ENCODE measurements at regions of chr14 and their contacts with region 1.

Region 1: GRCh38 chr14:76876076-76876475 is 49.9 kb downstream of the LRRC74A start:
- DNase-seq: peak; percentile 81
- H3K27ac ChIP-seq: no peak overlapping the region
- CTCF ChIP-seq: peak; percentile 90

Region 2: DNA sequence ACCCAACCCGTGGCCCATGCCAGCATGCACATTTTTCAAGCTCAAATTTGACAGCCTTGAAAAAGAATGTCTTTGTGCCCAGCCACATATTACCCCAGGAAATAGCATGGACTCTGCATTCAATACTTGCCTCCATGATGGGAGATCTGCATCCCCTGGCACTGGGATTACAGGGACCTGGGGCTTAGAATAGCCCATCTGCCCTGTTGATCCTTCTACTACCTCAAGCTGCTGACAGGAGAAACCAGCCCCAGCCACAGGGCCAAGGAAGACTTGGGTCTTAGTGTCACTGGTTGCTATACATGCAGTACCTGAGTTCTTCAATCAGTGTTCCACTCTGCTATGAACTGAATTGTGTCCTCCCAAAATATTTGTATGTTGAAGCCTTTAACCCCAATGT is 35.4 kb after region 1 on chr14:
- CTCF ChIA-PET with region 1: interaction called, 30 read pairs
- POLR2A ChIA-PET with region 1: no interaction called
- DNase-seq: no peak
- H3K27ac ChIP-seq: no peak overlapping the region
- CTCF ChIP-seq: no peak

Region 3: GRCh38 chr14:76918751-76919543 is 42.9 kb after region 1 on chr14:
- CTCF ChIA-PET with region 1: interaction called, 30 read pairs
- POLR2A ChIA-PET with region 1: no interaction called
- DNase-seq: peak; percentile 97
- H3K27ac ChIP-seq: peak overlapping the region; percentile 100
- CTCF ChIP-seq: no peak

Region 4: DNA sequence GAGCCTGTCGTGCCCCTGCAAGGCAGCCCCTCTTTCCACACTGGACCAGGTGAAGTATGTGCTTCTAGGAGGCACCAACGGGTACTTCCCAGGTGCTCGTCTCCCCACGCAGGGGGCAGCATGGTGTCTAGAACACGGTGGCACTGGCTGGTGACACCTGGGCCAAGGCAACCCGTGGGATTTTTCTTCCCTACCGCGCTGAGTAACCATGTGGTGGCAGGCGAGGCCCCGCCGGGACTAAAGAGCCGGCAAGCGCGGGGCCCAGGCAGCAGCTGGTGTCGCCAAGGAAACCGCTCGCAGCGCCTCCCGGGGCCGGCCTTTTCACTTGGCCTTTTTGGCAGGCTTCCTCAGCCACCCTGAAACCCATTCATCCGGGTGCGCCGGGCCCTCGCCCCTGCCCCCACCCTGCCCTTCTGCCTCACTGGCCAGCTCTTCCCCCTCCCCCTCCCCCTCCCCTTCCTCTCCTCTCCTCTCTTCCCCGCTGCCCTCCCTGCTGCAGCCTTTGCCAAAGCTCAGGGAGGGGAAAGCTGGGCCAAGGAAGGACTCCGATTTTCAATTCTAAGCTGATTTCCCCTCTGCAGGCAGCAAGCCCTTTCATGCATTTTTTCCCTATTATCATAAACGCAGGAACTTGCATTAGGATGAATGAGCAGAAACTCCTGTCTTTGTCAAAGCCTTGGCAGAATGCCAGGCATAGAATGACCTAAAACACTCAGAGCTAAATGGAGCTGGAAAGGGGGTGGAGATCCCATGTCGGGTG is 71.2 kb after region 1 on chr14:
- CTCF ChIA-PET with region 1: interaction called, 10 read pairs
- POLR2A ChIA-PET with region 1: no interaction called
- DNase-seq: peak; percentile 81
- H3K27ac ChIP-seq: peak overlapping the region; percentile 100
- CTCF ChIP-seq: peak; percentile 71

Region 5: GRCh38 chr14:77067632-77068514 is 191.8 kb after region 1 on chr14:
- CTCF ChIA-PET with region 1: interaction called, 81 read pairs
- POLR2A ChIA-PET with region 1: no interaction called
- DNase-seq: peak; percentile 80
- H3K27ac ChIP-seq: peak overlapping the region; percentile 57
- CTCF ChIP-seq: peak; percentile 91

Region 6: GRCh38 chr14:77097700-77098528 is 221.8 kb after region 1 on chr14 and contains the start of gene CIPC:
- CTCF ChIA-PET with region 1: interaction called, 14 read pairs
- POLR2A ChIA-PET with region 1: no interaction called
- DNase-seq: peak; percentile 98
- H3K27ac ChIP-seq: peak within 1 kb of the TSS; percentile 93
- CTCF ChIP-seq: no peak

Region 7: GRCh38 chr14:77151918-77152588 is 276.0 kb after region 1 on chr14:
- CTCF ChIA-PET with region 1: interaction called, 11 read pairs
- POLR2A ChIA-PET with region 1: no interaction called
- DNase-seq: peak; percentile 57
- H3K27ac ChIP-seq: no peak overlapping the region
- CTCF ChIP-seq: 0 out of 2 replicates have a peak, but pooled peaks have one; percentile 8